Prostate gland (tissue), 2 donors: ENCODE measurements at regions of chr16 and their contacts with region 1.

Region 1: GRCh38 chr16:28158136-28158535 is 53.6 kb downstream of the XPO6 start:
- DNase-seq: no peak
- H3K4me3 ChIP-seq: no peak overlapping the region
- H3K27ac ChIP-seq: no peak overlapping the region
- H3K4me1 ChIP-seq: no peaks in the 10 kb centered on the region
- H3K27me3 ChIP-seq: no peaks in the 10 kb centered on the region
- CTCF ChIP-seq: no peak
- POLR2A ChIP-seq: no peak

Region 2: GRCh38 chr16:27890866-27891265 is 267.3 kb before region 1 on chr16:
- intact Hi-C with region 1: no loop called
- DNase-seq: no peak
- H3K4me3 ChIP-seq: no peak overlapping the region
- H3K27ac ChIP-seq: no peak overlapping the region
- H3K4me1 ChIP-seq: no peaks in the 10 kb centered on the region
- H3K27me3 ChIP-seq: no peaks in the 10 kb centered on the region
- CTCF ChIP-seq: no peak
- POLR2A ChIP-seq: no peak

Region 3: GRCh38 chr16:28202147-28202746 is 44.1 kb after region 1 on chr16:
- intact Hi-C with region 1: loop called (anchors 10 kb)
- DNase-seq: no peak
- H3K4me3 ChIP-seq: no peak overlapping the region
- H3K27ac ChIP-seq: no peak overlapping the region
- H3K4me1 ChIP-seq: no peaks in the 10 kb centered on the region
- H3K27me3 ChIP-seq: no peaks in the 10 kb centered on the region
- CTCF ChIP-seq: no peak
- POLR2A ChIP-seq: no peak